Heart left ventricle (tissue), 16 donors: ENCODE measurements at regions of chr1 and their contacts with region 1.

Region 1: DNA sequence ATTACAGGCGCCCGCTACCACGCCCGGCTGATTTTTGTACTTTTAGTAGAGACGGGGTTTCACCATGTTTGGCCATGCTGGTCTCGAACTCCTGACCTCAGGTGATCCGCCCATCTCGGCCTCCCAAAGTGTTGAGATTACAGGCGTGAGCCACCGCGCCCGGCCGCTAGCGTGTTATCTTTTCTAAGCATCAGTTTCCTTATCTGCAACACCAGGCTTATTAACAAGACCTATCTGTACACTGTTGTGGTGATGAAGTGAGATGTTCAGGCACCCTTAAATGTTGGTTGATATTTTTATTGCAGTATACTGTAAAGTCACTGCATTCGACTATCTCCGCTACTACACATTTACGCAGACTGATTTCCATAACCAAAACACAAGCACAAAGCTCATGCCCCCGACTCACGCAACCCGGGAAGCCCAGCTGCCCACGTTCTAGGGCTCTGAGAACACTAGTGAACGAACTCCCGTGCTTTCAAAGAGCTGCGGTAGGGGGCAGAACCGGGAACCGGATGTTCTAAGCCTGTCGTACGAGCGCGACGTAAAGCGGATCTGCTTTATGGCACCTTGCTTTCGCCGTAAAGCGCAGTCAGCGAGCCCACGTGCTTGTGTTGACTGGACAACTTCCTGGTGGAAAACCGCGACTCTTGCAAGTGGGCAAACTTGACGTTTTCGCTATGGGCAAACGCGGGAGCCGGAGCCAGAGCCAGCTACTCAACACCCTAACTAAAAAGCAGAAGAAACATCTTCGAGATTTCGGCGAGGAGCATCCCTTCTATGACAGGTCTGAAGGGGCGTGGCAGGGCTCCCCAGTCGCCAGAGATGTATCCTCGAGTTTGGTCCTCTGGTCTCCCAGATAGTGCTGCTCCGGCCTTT is at the start of gene UTP25:
- DNase-seq: peak; percentile 91 to 95 (median 93)
- ATAC-seq: peak; percentile 81 to 93 (median 89)
- H3K4me3 ChIP-seq: peak within 1 kb of the TSS; percentile 64 to 91 (median 80)
- H3K27ac ChIP-seq: peak within 1 kb of the TSS; percentile 0 to 86 (median 66)
- H3K4me1 ChIP-seq: peaks cover 0 to 27% (median 8%) of the 10 kb centered on the region in 12 donors
- H3K27me3 ChIP-seq: no peaks in the 10 kb centered on the region
- CTCF ChIP-seq: peak; percentile 55 to 90 (median 71)
- POLR2A ChIP-seq: peak in 1 of 2 donors; percentile 62
- total RNA-seq, gene UTP25: 1.6 to 5.5 (median 3.6) TPM

Region 2: DNA sequence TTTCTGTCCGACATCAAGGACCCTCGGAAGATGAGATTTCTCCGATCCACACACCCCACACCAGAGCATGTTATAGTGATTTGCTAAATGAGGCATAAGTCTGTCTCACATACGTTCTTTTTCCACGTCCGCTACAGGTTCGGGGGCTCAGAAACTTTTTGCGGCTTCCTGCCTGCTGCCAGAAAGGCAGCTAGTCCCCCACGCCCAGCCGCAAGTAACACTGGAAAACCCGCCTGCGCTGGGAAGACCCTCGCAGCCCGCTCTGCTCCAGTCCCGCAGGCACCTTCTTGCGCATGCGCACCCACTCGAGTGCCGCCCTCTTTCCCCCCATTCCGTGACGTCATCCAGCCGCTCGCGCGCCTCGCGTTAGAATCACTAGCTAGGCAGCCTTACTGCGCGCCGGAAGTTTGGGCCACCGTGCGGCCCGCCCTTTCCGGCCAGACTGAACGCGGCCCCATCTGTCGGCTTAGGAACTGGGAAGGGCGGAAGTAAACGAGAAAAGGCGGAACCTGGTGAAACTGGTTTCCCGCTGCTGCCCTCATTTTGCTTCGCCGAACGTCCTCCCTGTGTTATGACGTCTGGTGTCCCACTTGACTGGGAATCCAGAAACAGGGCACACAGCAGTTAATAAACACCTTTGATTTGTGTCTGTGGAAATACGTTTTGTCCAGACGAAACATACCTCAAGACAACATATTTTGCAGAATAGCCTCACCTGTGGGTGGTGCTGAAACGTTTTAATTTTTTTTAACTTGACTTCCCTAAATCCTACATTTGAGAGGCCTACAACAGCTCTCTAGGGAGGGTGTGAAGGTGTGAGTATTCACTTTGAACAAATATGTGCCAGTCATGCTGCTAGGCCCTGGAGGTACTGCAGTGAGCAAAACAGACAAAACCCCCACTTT is 43.1 kb before region 1 on chr1 and contains the start of gene C1orf74:
- intact Hi-C with region 1: loop called in 5 of 10 experiments (anchors 1 to 5 kb)
- DNase-seq: peak; percentile 99 to 100 (median 99)
- ATAC-seq: peak; percentile 93 to 99 (median 98)
- H3K4me3 ChIP-seq: peak within 1 kb of the TSS; percentile 42 to 76 (median 64)
- H3K27ac ChIP-seq: peak within 1 kb of the TSS; percentile 70 to 94 (median 86)
- H3K4me1 ChIP-seq: peaks cover 4 to 45% (median 20%) of the 10 kb centered on the region in 12 donors
- H3K27me3 ChIP-seq: no peaks in the 10 kb centered on the region
- CTCF ChIP-seq: peak in 2 of 12 donors; percentile 7 to 23
- POLR2A ChIP-seq: peak in 1 of 2 donors; percentile 83
- total RNA-seq, gene C1orf74: 1.6 to 2.6 (median 2.4) TPM